ENCODE measurements at regions of chr9 and their contacts with region 1.

Region 1: GRCh38 chr9:126611592-126612325 is 2.0 kb upstream of the LMX1B start:
- DNase-seq: peak; percentile 68
- ATAC-seq: peak; percentile 91
- H3K4me3 Mint-ChIP-seq: peak overlapping the region; percentile 73
- H3K27ac Mint-ChIP-seq: no peak overlapping the region
- H3K4me1 Mint-ChIP-seq: peaks cover 34% of the 10 kb centered on the region
- H3K27me3 Mint-ChIP-seq: peaks cover 59% of the 10 kb centered on the region
- CTCF ChIP-seq: no peak

Region 2: GRCh38 chr9:126623667-126624478 is 12.1 kb after region 1 on chr9:
- CTCF ChIA-PET with region 1: no interaction called
- POLR2A ChIA-PET with region 1: no interaction called
- intact Hi-C with region 1: loop called (anchors 1 kb)
- DNase-seq: no peak
- ATAC-seq: no peak
- H3K4me3 Mint-ChIP-seq: no peak overlapping the region
- H3K27ac Mint-ChIP-seq: no peak overlapping the region
- H3K4me1 Mint-ChIP-seq: peaks cover 23% of the 10 kb centered on the region
- H3K27me3 Mint-ChIP-seq: peaks cover 64% of the 10 kb centered on the region
- CTCF ChIP-seq: no peak

Region 3: GRCh38 chr9:126690431-126691350 is 78.9 kb after region 1 on chr9:
- CTCF ChIA-PET with region 1: interaction called, 3 read pairs
- POLR2A ChIA-PET with region 1: no interaction called
- intact Hi-C with region 1: loop called (anchors 1 kb)
- DNase-seq: peak; percentile 48
- ATAC-seq: peak; percentile 69
- H3K4me3 Mint-ChIP-seq: no peak overlapping the region
- H3K27ac Mint-ChIP-seq: no peak overlapping the region
- H3K4me1 Mint-ChIP-seq: no peaks in the 10 kb centered on the region
- H3K27me3 Mint-ChIP-seq: peaks cover 43% of the 10 kb centered on the region
- CTCF ChIP-seq: no peak

Region 4: GRCh38 chr9:126781186-126782052 is 169.7 kb after region 1 on chr9:
- CTCF ChIA-PET with region 1: interaction called, 7 read pairs
- POLR2A ChIA-PET with region 1: no interaction called
- intact Hi-C with region 1: loop called (anchors 1 kb)
- DNase-seq: peak; percentile 83
- ATAC-seq: peak; percentile 89
- H3K4me3 Mint-ChIP-seq: no peak overlapping the region
- H3K27ac Mint-ChIP-seq: no peak overlapping the region
- H3K4me1 Mint-ChIP-seq: no peaks in the 10 kb centered on the region
- H3K27me3 Mint-ChIP-seq: peaks cover 27% of the 10 kb centered on the region
- CTCF ChIP-seq: peak; percentile 88

Measured in activated B cell treated with CpG ODN at 0.5 μM for 24 hours (primary cell).